ENCODE measurements at regions of chr12 and their contacts with region 1.

Region 1: DNA sequence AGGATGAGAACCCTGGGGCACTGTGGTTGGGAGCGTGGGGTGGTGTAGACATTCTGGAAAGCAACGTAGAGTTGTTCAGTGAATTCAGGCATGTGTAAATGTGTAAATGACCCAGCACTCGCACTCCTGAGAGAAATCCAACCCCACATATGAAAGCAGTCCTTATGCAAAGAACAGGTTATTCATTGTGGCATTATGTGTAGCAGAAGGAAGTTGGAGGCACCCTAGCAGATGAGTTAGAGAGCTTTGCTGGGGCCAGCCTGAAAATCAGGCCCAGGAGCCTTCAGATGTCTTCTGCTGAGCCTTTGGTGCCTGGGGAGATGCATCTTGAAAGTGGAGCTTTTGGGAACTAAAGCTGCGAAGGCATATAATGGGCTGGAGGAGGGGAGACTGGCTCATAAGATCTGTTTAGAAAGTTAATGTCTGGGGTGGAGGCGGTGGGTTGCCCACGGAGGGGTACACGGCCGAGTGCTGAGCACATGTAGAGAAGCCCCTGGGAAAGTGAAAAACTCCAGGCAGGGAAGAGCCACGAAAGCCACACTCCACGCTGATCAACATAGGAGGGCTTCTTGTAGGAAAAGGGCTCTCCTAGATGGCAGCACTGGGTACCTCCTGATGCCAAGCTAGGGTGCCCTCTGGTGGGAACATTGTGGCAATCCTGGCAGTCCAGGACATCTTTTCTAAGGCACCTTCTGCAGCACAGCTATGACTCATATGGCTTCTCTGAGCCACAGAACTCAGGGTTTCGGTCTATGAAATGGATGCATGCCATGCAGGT is 6.0 kb upstream of the KRT83 start:
- DNase-seq: peak; percentile 87
- H3K4me3 Mint-ChIP-seq: no peak overlapping the region
- H3K27ac Mint-ChIP-seq: no peak overlapping the region
- H3K4me1 Mint-ChIP-seq: peaks cover 15% of the 10 kb centered on the region
- H3K27me3 Mint-ChIP-seq: peaks cover 5% of the 10 kb centered on the region

Region 2: GRCh38 chr12:52285172-52285745 is 42.0 kb before region 1 on chr12:
- CTCF ChIA-PET with region 1: no interaction called
- POLR2A ChIA-PET with region 1: no interaction called
- DNase-seq: no peak
- H3K4me3 Mint-ChIP-seq: no peak overlapping the region
- H3K27ac Mint-ChIP-seq: no peak overlapping the region
- H3K4me1 Mint-ChIP-seq: peaks cover 11% of the 10 kb centered on the region
- H3K27me3 Mint-ChIP-seq: peaks cover 7% of the 10 kb centered on the region

Region 3: GRCh38 chr12:52295663-52296062 is 31.6 kb before region 1 on chr12:
- CTCF ChIA-PET with region 1: no interaction called
- POLR2A ChIA-PET with region 1: no interaction called
- DNase-seq: no peak
- H3K4me3 Mint-ChIP-seq: no peak overlapping the region
- H3K27ac Mint-ChIP-seq: no peak overlapping the region
- H3K4me1 Mint-ChIP-seq: peaks cover 9% of the 10 kb centered on the region
- H3K27me3 Mint-ChIP-seq: peaks cover 63% of the 10 kb centered on the region

Region 4: GRCh38 chr12:52310622-52311284 is 16.5 kb before region 1 on chr12:
- CTCF ChIA-PET with region 1: interaction called, 17 read pairs
- POLR2A ChIA-PET with region 1: no interaction called
- DNase-seq: no peak
- H3K4me3 Mint-ChIP-seq: no peak overlapping the region
- H3K27ac Mint-ChIP-seq: no peak overlapping the region
- H3K4me1 Mint-ChIP-seq: peaks cover 6% of the 10 kb centered on the region
- H3K27me3 Mint-ChIP-seq: peaks cover 73% of the 10 kb centered on the region

Region 5: GRCh38 chr12:52650520-52651081 is 323.4 kb after region 1 on chr12:
- CTCF ChIA-PET with region 1: no interaction called
- POLR2A ChIA-PET with region 1: no interaction called
- DNase-seq: no peak
- H3K4me3 Mint-ChIP-seq: no peak overlapping the region
- H3K27ac Mint-ChIP-seq: no peak overlapping the region
- H3K4me1 Mint-ChIP-seq: peaks cover 58% of the 10 kb centered on the region
- H3K27me3 Mint-ChIP-seq: peaks cover 14% of the 10 kb centered on the region

Measured in activated CD4-positive, alpha-beta T cell treated with anti-CD3 and anti-CD28 coated beads, Interleukin-2, amount 10 ng/mL, durations not matched to agents 7 days and 5 days (primary cell).